ENCODE measurements at regions of chr6 and their contacts with region 1.

Region 1: GRCh38 chr6:149834513-149835481 is 29.4 kb downstream of the LRP11 start:
- DNase-seq: no peak
- ATAC-seq: peak; percentile 73
- H3K4me3 ChIP-seq: no peak overlapping the region
- H3K27ac ChIP-seq: no peak overlapping the region
- H3K4me1 ChIP-seq: no peaks in the 10 kb centered on the region
- H3K27me3 ChIP-seq: no peaks in the 10 kb centered on the region; a peak in 1 of 4 replicates
- CTCF ChIP-seq: peak; percentile 80 to 89 (median 81)
- EP300 ChIP-seq: no peak
- POLR2A ChIP-seq: no peak
- RAD21 ChIP-seq: peak; percentile 83

Region 2: GRCh38 chr6:149696901-149697300 is 137.9 kb before region 1 on chr6:
- CTCF ChIA-PET with region 1: no interaction called
- POLR2A ChIA-PET with region 1: no interaction called
- RAD21 ChIA-PET with region 1: no interaction called
- SMC1A ChIA-PET with region 1: no interaction called
- in situ Hi-C with region 1: no loop called
- intact Hi-C with region 1: no loop called
- DNase-seq: no peak
- ATAC-seq: no peak
- H3K4me3 ChIP-seq: no peak overlapping the region
- H3K27ac ChIP-seq: no peak overlapping the region
- H3K4me1 ChIP-seq: no peaks in the 10 kb centered on the region
- H3K27me3 ChIP-seq: no peaks in the 10 kb centered on the region
- CTCF ChIP-seq: no peak
- EP300 ChIP-seq: no peak
- POLR2A ChIP-seq: no peak
- RAD21 ChIP-seq: no peak

Region 3: DNA sequence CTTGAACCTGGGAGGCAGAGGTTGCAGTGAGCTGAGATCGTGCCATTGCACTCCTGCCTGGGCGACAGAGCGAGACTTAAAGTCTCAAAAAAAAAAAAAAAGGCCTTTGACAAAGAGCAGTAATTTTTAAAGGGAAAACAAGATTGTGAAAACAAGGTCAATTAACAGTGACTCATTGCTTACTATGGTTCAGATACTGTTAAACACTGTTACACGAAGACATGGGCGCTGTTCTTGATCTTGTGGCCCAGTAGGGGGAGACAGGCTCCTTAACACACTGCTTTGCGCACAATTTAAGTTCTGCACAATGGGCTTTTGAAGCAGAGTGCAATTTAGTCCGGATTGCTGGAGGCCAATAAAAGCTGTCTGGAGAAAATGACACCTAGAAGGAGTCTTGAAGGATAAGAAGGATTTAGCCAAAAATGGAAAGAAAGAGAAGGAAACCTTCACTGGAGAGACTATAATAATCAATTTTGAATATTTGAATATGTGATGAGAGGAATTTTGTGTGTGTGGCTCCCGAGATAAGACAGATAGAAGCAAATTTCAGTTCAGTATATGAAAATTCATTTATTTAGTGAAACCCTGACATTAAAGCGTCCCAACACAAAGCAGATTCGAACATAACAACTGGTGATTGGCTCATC is 110.9 kb before region 1 on chr6:
- CTCF ChIA-PET with region 1: interaction called, 11 read pairs
- POLR2A ChIA-PET with region 1: no interaction called
- RAD21 ChIA-PET with region 1: no interaction called
- SMC1A ChIA-PET with region 1: no interaction called
- in situ Hi-C with region 1: no loop called
- intact Hi-C with region 1: loop called (anchors 5 kb)
- DNase-seq: no peak
- ATAC-seq: peak; percentile 91
- H3K4me3 ChIP-seq: no peak overlapping the region
- H3K27ac ChIP-seq: no peak overlapping the region
- H3K4me1 ChIP-seq: no peaks in the 10 kb centered on the region
- H3K27me3 ChIP-seq: no peaks in the 10 kb centered on the region
- CTCF ChIP-seq: peak; percentile 73 to 76 (median 73)
- EP300 ChIP-seq: no peak
- POLR2A ChIP-seq: no peak
- RAD21 ChIP-seq: peak; percentile 68

Region 4: DNA sequence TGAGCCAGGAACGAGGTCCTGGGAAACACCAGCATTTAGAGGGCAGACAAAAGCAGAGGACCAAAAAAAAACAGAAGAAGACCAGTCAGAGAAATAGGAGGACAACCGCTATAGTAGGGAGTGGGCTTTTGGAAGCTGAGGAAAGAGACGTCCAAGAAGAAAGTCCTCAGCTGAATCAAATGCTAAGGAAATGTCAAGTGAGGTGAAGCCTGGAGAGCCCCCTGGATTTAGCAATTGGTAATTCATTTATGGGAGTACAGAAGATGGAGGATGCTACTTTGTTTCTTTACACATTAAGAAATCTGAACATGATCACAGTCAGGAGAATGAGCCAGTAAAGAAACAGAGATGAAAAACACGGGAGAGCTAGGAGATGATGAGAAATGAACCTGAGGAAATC is 11.8 kb before region 1 on chr6:
- CTCF ChIA-PET with region 1: interaction called, 17 read pairs
- POLR2A ChIA-PET with region 1: no interaction called
- RAD21 ChIA-PET with region 1: interaction called, 4 read pairs
- SMC1A ChIA-PET with region 1: interaction called, 5 read pairs
- in situ Hi-C with region 1: no loop called
- intact Hi-C with region 1: no loop called
- DNase-seq: no peak
- ATAC-seq: no peak
- H3K4me3 ChIP-seq: no peak overlapping the region
- H3K27ac ChIP-seq: no peak overlapping the region
- H3K4me1 ChIP-seq: no peaks in the 10 kb centered on the region
- H3K27me3 ChIP-seq: peaks cover 0 to 7% of the 10 kb centered on the region in 2 experiments; a peak in 2 of 4 replicates
- CTCF ChIP-seq: no peak; a peak in 1 of 6 replicates
- EP300 ChIP-seq: no peak
- POLR2A ChIP-seq: no peak
- RAD21 ChIP-seq: peak; percentile 31; the same call in 1 of the 2 replicates

Region 5: DNA sequence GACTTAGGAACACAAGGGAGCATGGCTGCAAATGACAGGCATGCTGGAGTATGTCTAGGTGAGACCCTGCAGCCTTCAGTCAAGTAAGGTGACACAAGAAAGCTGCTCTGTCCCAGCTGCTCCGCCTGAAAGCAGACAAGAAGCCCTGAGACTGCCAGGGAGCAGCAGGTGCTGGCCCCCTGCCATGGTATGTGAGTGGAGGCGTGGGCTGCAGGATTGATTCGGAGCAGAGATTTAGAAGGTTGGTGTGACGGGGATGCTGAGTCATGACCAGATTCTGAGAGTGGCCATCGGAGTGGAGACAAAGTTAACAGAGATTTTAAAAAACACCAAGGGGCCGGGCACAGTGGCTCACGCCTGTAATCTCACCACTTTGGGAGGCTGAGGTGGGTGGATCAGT is 11.5 kb after region 1 on chr6:
- CTCF ChIA-PET with region 1: interaction called, 18 read pairs
- POLR2A ChIA-PET with region 1: no interaction called
- RAD21 ChIA-PET with region 1: interaction called, 3 read pairs
- SMC1A ChIA-PET with region 1: interaction called, 3 read pairs
- in situ Hi-C with region 1: no loop called
- intact Hi-C with region 1: no loop called
- DNase-seq: no peak
- ATAC-seq: no peak
- H3K4me3 ChIP-seq: no peak overlapping the region
- H3K27ac ChIP-seq: no peak overlapping the region
- H3K4me1 ChIP-seq: no peaks in the 10 kb centered on the region
- H3K27me3 ChIP-seq: peaks cover 0 to 1% of the 10 kb centered on the region in 2 experiments; a peak in 3 of 4 replicates
- CTCF ChIP-seq: no peak
- EP300 ChIP-seq: no peak
- POLR2A ChIP-seq: no peak
- RAD21 ChIP-seq: no peak

Region 6: GRCh38 chr6:149863697-149864577 is 29.1 kb after region 1 on chr6 and contains the start of gene LRP11:
- CTCF ChIA-PET with region 1: interaction called, 12 read pairs
- POLR2A ChIA-PET with region 1: no interaction called
- RAD21 ChIA-PET with region 1: interaction called, 3 read pairs
- SMC1A ChIA-PET with region 1: interaction called, 8 read pairs
- in situ Hi-C with region 1: no loop called
- intact Hi-C with region 1: loop called (anchors 1 kb)
- DNase-seq: no peak
- ATAC-seq: peak; percentile 95
- H3K4me3 ChIP-seq: peak within 1 kb of the TSS; percentile 51
- H3K27ac ChIP-seq: no peak within 1 kb of the TSS
- H3K4me1 ChIP-seq: no peaks in the 10 kb centered on the region; the same call in 1 of the 2 replicates
- H3K27me3 ChIP-seq: peaks cover 5 to 12% of the 10 kb centered on the region in 2 experiments
- CTCF ChIP-seq: no peak
- EP300 ChIP-seq: no peak
- POLR2A ChIP-seq: peak; percentile 24; the same call in 1 of the 2 replicates
- RAD21 ChIP-seq: no peak
- polyA plus RNA-seq, gene LRP11: 0.04 TPM in 1 of 2 experiments, not detected in the other

Region 7: GRCh38 chr6:149925974-149926777 is 91.4 kb after region 1 on chr6:
- CTCF ChIA-PET with region 1: interaction called, 11 read pairs
- POLR2A ChIA-PET with region 1: no interaction called
- RAD21 ChIA-PET with region 1: no interaction called
- SMC1A ChIA-PET with region 1: no interaction called
- in situ Hi-C with region 1: loop called (anchors 5 kb)
- intact Hi-C with region 1: loop called (anchors 1 kb)
- DNase-seq: no peak
- ATAC-seq: peak; percentile 97
- H3K4me3 ChIP-seq: no peak overlapping the region
- H3K27ac ChIP-seq: no peak overlapping the region
- H3K4me1 ChIP-seq: no peaks in the 10 kb centered on the region
- H3K27me3 ChIP-seq: peaks cover 8 to 17% of the 10 kb centered on the region in 2 experiments
- CTCF ChIP-seq: peak; percentile 58 to 70 (median 65)
- EP300 ChIP-seq: no peak
- POLR2A ChIP-seq: no peak
- RAD21 ChIP-seq: peak; percentile 74

Region 8: DNA sequence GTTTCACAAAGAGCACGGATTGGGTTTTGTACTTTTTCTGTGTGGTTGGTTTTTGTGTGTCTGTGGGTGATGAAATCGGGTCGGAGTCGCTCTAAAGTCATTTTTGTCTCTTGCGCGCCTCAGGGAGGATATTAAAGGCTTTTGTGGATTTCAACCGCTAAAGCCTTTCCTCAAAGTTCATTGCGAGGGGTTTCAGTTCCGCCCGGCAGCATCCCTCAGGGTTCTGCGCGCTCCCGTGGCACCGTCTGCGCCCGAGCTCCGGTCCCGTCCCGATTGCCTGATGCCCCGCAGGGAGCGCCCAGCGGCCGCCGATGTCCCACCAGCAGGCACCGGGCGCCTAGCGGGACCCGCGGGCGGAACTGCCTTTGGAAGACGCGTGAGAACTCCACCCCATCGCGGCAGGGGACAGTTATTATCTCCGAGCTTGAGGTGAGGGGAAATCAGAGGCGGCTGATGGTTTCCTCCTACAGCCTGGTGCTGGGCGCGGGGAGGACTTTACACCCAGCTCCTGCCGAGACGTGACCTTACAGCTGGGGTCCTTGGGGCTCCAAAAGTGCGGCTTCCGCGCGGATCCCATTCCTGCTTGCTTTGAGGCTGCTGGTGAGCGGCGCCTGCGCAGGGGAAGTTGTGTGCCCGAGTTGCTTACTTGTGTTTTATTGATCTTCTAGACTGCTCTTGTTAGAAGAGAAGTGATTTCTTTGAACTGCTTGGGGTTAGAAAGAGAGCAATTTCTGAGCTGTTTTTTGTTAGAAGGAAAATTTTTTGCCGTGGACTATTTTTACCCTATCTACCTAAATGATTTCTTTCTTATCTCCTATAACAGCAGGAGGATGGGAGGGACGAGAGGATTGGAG is 156.0 kb after region 1 on chr6:
- CTCF ChIA-PET with region 1: no interaction called
- POLR2A ChIA-PET with region 1: no interaction called
- RAD21 ChIA-PET with region 1: no interaction called
- SMC1A ChIA-PET with region 1: no interaction called
- in situ Hi-C with region 1: no loop called
- intact Hi-C with region 1: no loop called
- DNase-seq: no peak
- ATAC-seq: peak; percentile 77
- H3K4me3 ChIP-seq: peak overlapping the region; percentile 49; the same call in 1 of the 2 replicates
- H3K27ac ChIP-seq: no peak overlapping the region
- H3K4me1 ChIP-seq: peaks cover 14% of the 10 kb centered on the region
- H3K27me3 ChIP-seq: peaks cover 5 to 22% of the 10 kb centered on the region in 2 experiments
- CTCF ChIP-seq: no peak
- EP300 ChIP-seq: no peak
- POLR2A ChIP-seq: no peak
- RAD21 ChIP-seq: no peak

Region 9: DNA sequence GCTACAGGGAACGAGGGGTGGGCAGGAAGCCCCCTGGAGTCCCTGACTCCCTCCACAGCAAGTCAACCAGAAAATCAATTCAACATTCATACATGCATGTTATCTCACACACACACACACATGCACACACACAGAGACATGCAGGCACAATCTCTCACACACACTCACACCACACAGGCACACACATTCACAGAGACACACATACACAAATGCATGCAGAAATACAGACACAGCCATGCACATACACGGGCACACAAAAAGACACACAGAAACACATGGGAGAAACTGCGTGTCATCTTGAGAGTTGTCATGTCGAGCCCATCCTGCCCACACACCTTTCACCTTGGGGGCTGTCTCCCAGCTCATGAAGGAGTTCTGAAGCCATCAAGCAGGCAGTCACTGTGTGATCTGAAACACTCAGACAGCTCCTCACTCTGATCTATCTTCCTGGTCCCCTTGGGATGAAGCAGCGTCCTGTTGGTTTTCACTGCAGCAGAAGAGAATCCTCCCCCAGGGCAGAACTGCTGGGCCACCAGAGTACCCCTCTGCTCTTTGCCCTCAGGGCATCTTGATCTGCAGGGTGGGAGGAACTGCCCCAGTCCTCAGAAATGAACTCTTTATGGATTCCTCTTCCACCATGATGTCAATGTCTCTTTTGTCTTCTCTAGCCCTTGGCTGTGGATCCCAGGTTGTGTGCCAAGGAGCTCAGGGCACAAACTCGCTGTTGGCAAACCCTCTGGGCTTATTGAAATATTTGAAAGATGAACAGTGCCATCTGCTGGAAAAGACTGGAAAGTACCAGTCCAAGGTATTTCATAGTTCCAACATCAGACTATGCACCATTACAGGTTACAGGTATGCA is 181.8 kb after region 1 on chr6:
- CTCF ChIA-PET with region 1: no interaction called
- POLR2A ChIA-PET with region 1: no interaction called
- RAD21 ChIA-PET with region 1: no interaction called
- SMC1A ChIA-PET with region 1: no interaction called
- in situ Hi-C with region 1: no loop called
- intact Hi-C with region 1: loop called (anchors 1 kb)
- DNase-seq: no peak
- ATAC-seq: peak; percentile 89
- H3K4me3 ChIP-seq: no peak overlapping the region
- H3K27ac ChIP-seq: no peak overlapping the region
- H3K4me1 ChIP-seq: no peaks in the 10 kb centered on the region
- H3K27me3 ChIP-seq: peaks cover 0 to 3% of the 10 kb centered on the region in 2 experiments; a peak in 3 of 4 replicates
- CTCF ChIP-seq: peak; percentile 51 to 58 (median 55); a peak in 5 of 6 replicates
- EP300 ChIP-seq: no peak
- POLR2A ChIP-seq: no peak
- RAD21 ChIP-seq: peak; percentile 79

Measured in GM12878 (cell line).